T-cell (primary cell): ENCODE measurements at regions of chr3 and their contacts with region 1.

Region 1: GRCh38 chr3:52253314-52254304 is 8.1 kb downstream of the PPM1M start:
- DNase-seq: peak; percentile 65 to 96 (median 89)
- ATAC-seq: peak; percentile 89 to 90 (median 90)
- H3K4me3 ChIP-seq: peak overlapping the region; percentile 29 to 30
- H3K4me3 Mint-ChIP-seq: peak overlapping the region; percentile 66 to 75 (median 74)
- H3K27ac ChIP-seq: peak overlapping the region; percentile 91
- H3K27ac Mint-ChIP-seq: peak overlapping the region; percentile 97 to 99
- H3K4me1 ChIP-seq: peaks cover 50 to 92% of the 10 kb centered on the region in 2 experiments
- H3K4me1 Mint-ChIP-seq: peaks cover 88 to 95% (median 92%) of the 10 kb centered on the region in 3 donors
- H3K27me3 ChIP-seq: no peaks in the 10 kb centered on the region
- H3K27me3 Mint-ChIP-seq: no peaks in the 10 kb centered on the region

Region 2: DNA sequence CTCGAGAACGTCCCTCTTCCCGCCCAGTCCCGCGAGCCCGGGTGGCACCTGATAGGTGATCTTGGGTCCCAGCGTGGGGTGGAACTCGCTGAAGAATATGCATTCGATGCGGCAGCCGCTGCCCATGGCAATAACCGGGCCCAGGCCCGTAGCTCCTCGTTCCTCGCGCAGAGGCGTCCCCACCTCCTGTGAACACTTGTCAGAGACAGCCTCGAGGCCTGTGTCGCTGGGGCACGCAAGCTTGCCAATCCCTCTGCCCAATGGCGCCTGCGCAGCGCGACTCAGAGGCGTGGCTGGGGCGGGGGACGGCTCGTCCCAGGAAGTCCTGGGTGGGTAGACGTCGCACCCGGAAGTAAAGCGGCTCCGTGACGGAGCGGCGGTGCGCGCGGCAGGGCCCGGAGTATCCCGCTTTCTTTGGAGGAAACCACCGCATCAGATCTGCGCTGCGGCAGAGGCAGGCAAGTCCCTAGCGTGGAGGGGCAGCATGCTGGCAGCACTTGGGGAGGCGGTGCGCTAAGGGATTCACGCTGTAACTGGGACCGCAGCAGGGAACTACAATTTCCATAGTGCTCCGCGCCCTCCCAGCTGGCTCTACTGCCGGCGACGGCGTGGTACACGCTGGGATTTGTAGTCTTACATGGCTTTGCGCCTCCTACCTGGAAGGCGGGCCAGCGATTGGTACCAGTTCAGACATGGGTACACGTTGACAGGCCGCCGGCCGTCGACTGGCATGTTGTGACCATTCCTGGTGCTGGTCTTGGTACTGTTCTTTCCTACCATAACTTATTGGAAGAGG is 1902.9 kb before region 1 on chr3 and contains the starts of genes CYB561D2 and NPRL2:
- CTCF ChIA-PET with region 1: interaction called in 1 of 2 experiments, 10 read pairs
- POLR2A ChIA-PET with region 1: no interaction called
- DNase-seq: peak; percentile 98 to 100 (median 99)
- ATAC-seq: peak; percentile 88 to 91 (median 90)
- H3K4me3 ChIP-seq: peak within 1 kb of the TSS; percentile 88 to 96
- H3K4me3 Mint-ChIP-seq: peak within 1 kb of the TSS; percentile 94 to 99 (median 97)
- H3K27ac ChIP-seq: peak within 1 kb of the TSS; percentile 89
- H3K27ac Mint-ChIP-seq: peak within 1 kb of the TSS; percentile 99 to 100
- H3K4me1 ChIP-seq: peaks cover 20 to 69% of the 10 kb centered on the region in 2 experiments
- H3K4me1 Mint-ChIP-seq: peaks cover 66 to 70% (median 67%) of the 10 kb centered on the region in 3 donors
- H3K27me3 ChIP-seq: no peaks in the 10 kb centered on the region
- H3K27me3 Mint-ChIP-seq: no peaks in the 10 kb centered on the region
- total RNA-seq, gene CYB561D2: 25.7 to 45.3 (median 32.7) TPM
- total RNA-seq, gene NPRL2: 26.6 to 52.2 (median 48.1) TPM

Region 3: GRCh38 chr3:52046186-52046913 is 207.3 kb before region 1 on chr3:
- CTCF ChIA-PET with region 1: no interaction called
- POLR2A ChIA-PET with region 1: no interaction called
- DNase-seq: no peak
- ATAC-seq: no peak
- H3K4me3 ChIP-seq: no peak overlapping the region
- H3K4me3 Mint-ChIP-seq: no peak overlapping the region
- H3K27ac ChIP-seq: peak overlapping the region; percentile 29
- H3K27ac Mint-ChIP-seq: peak overlapping the region; percentile 72 to 84
- H3K4me1 ChIP-seq: peaks cover 3 to 59% of the 10 kb centered on the region in 2 experiments
- H3K4me1 Mint-ChIP-seq: peaks cover 41 to 58% (median 55%) of the 10 kb centered on the region in 3 donors
- H3K27me3 ChIP-seq: no peaks in the 10 kb centered on the region
- H3K27me3 Mint-ChIP-seq: no peaks in the 10 kb centered on the region

Region 4: GRCh38 chr3:52240059-52240879 is 13.3 kb before region 1 on chr3:
- CTCF ChIA-PET with region 1: interaction called in 1 of 2 experiments, 15 read pairs
- POLR2A ChIA-PET with region 1: interaction called, 4 to 7 read pairs
- DNase-seq: peak in 11 of 35 experiments; percentile 29 to 67 (median 42)
- ATAC-seq: peak in 2 of 4 experiments; percentile 10 to 17
- H3K4me3 ChIP-seq: peak overlapping the region; percentile 84 to 99
- H3K4me3 Mint-ChIP-seq: peak overlapping the region; percentile 91 to 98 (median 97)
- H3K27ac ChIP-seq: peak overlapping the region; percentile 83
- H3K27ac Mint-ChIP-seq: peak overlapping the region; percentile 89 to 91
- H3K4me1 ChIP-seq: peaks cover 54 to 77% of the 10 kb centered on the region in 2 experiments
- H3K4me1 Mint-ChIP-seq: peaks cover 81 to 87% (median 84%) of the 10 kb centered on the region in 3 donors
- H3K27me3 ChIP-seq: no peaks in the 10 kb centered on the region
- H3K27me3 Mint-ChIP-seq: no peaks in the 10 kb centered on the region

Region 5: DNA sequence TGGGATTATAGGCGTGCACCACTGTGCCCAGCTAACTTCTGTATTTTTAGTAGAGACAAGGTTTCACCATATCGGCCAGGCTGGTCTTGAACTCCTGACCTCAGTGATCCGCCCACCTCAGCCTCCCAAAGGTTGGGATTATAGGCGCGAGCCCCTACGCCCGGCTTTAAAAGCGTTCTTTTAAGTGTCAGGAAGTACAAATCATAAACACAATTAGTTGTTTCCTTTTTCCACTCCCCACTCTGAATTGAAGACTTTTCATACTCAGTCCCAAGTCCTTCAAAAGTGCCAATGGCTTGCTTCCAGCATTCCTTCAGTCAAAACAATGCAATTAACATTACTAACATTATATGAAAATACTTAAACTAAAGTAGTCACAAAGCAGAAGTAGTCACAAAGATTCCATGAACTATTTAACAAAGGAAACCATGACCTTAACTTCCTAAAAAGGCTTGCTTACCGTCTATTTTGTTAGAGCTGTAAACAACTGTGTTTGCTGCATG is 16.7 kb after region 1 on chr3:
- CTCF ChIA-PET with region 1: interaction called in 1 of 2 experiments, 15 read pairs
- POLR2A ChIA-PET with region 1: interaction called, 7 to 15 read pairs
- DNase-seq: peak in 1 of 35 experiments; percentile 12
- ATAC-seq: no peak
- H3K4me3 ChIP-seq: no peak overlapping the region
- H3K4me3 Mint-ChIP-seq: peak overlapping the region; percentile 84 to 92 (median 89)
- H3K27ac ChIP-seq: peak overlapping the region; percentile 80
- H3K27ac Mint-ChIP-seq: peak overlapping the region; percentile 92 to 93
- H3K4me1 ChIP-seq: peaks cover 45 to 63% of the 10 kb centered on the region in 2 experiments
- H3K4me1 Mint-ChIP-seq: peaks cover 82 to 89% (median 88%) of the 10 kb centered on the region in 3 donors
- H3K27me3 ChIP-seq: no peaks in the 10 kb centered on the region
- H3K27me3 Mint-ChIP-seq: no peaks in the 10 kb centered on the region

Region 6: DNA sequence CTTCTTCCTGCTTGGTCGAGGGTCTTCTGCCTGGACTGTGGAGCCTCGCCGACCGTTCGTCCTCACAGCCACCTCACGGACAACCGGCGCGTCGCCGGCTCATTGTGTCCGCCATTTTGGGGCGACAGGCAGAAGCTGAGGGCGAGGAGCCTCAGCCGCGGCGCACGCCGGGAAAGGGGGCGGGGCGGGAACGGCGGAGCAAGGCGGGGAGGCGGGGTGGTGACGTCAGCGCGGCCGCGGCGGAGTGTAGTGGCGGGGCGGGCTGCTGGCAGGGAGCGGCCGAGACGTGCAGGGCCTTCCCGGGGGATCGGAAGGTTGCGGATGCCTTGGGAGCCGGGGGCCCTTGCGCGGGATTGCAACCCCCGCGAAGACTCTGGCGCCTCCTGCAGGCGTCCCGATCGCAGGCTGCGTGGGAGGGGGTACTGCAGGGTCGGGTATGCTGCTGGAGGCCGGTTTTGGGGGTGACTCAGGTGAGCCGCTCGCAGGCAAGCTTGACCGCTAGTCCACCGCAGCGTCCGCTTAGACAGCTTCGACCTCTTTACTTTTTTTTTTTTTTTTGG is 25.0 kb after region 1 on chr3 and contains the start of gene WDR82:
- CTCF ChIA-PET with region 1: interaction called in 1 of 2 experiments, 17 read pairs
- POLR2A ChIA-PET with region 1: interaction called in 1 of 2 experiments, 20 read pairs
- DNase-seq: peak; percentile 91 to 99 (median 96)
- ATAC-seq: peak; percentile 81 to 87 (median 84)
- H3K4me3 ChIP-seq: peak within 1 kb of the TSS; percentile 69 to 86
- H3K4me3 Mint-ChIP-seq: peak within 1 kb of the TSS; percentile 89 to 92 (median 91)
- H3K27ac ChIP-seq: peak within 1 kb of the TSS; percentile 93
- H3K27ac Mint-ChIP-seq: peak within 1 kb of the TSS; percentile 95 to 98
- H3K4me1 ChIP-seq: peaks cover 48 to 62% of the 10 kb centered on the region in 2 experiments
- H3K4me1 Mint-ChIP-seq: peaks cover 60 to 81% (median 74%) of the 10 kb centered on the region in 3 donors
- H3K27me3 ChIP-seq: no peaks in the 10 kb centered on the region
- H3K27me3 Mint-ChIP-seq: no peaks in the 10 kb centered on the region
- total RNA-seq, gene WDR82: 119 to 159 (median 154) TPM